Aorta (tissue), 5 donors: ENCODE measurements at regions of chr18 and their contacts with region 1.

Region 1: DNA sequence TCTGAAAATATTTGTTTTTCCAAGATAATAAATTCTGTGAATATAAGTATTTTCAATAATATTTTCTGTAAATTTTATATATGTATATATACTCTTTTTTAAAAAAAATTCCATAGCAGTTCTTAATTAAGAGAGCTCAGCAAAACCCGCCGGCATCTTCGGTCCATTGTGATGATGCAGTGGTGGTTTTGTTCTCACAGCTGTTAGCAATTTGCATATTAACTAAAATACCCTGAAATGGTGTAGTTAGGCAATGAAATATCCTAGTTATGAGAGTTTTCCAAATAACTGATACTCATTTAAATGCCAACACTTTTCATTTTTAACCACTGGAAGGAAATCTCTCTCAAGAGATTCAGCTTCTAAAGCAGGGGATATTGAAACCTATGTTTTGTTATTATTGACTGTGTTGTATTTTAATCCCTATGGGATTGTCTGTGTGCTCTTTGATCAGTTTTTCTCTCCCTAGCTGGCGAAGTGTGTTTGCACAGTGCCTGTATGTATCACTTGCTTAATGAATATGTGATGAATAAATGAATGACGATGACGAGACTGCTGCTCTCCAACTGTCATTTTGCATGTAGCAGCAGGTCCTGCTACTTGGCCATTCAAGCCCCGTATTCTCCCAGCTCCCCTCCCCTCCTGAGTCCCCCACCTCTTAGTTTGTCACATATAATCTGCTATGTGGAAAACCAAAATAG is 42.4 kb downstream of the PSMG2 start:
- DNase-seq: no peak
- ATAC-seq: no peak
- H3K4me3 ChIP-seq: no peak overlapping the region
- H3K27ac ChIP-seq: no peak overlapping the region
- H3K4me1 ChIP-seq: no peaks in the 10 kb centered on the region
- H3K27me3 ChIP-seq: no peaks in the 10 kb centered on the region

Region 2: DNA sequence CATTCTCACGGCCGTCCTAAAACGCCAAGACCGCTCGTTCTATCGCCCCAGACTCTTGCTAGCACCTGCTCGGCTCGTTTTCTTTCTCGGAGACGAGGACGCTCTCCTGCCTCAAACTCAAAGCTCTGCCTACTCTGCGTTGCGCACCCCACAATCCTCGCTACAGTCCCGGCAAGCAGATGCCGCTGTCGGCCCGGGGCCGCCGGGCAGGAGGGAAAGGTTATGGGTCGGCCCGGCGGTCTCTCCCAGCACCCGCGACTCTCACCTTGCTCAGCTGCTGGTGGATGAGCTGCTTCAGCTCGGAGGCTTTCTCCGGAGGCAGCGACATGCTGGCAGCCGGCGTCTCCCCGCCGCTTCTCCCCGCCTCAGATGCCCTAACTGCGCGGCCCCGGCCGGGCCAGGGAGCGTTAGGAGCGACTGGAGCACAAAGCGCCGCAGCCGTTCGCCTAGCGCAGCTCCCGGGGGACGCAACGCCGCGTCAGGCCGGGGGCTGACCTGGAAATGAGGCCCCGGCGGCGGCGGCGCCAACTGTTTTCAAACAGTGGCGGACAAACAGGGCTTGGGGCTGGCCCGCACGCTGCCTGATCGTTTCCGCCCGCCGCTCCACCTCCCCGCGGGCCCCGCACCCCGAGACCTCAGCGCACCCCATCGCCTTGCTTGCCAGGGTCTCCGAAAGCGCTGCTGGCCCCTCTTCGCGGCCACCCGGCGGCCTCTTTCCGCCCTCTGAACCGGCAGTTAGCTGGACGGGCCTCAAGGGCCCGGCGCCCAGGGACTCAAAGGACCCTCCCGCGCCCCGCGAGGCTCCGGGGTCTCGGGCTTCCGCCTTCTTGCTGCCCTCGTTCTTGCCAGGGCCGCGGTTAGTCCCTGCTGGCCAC is 42.8 kb before region 1 on chr18 and contains the starts of genes CEP76 and PSMG2:
- intact Hi-C with region 1: no loop called
- DNase-seq: peak; percentile 94 to 97
- ATAC-seq: peak; percentile 98
- H3K4me3 ChIP-seq: peak within 1 kb of the TSS; percentile 90 to 97
- H3K27ac ChIP-seq: peak within 1 kb of the TSS; percentile 91 to 98
- H3K4me1 ChIP-seq: peaks cover 0 to 3% of the 10 kb centered on the region in 2 donors
- H3K27me3 ChIP-seq: no peaks in the 10 kb centered on the region
- total RNA-seq, gene CEP76: 3.9 to 7.3 TPM
- total RNA-seq, gene PSMG2: 53.9 to 62.0 TPM

Region 3: GRCh38 chr18:12890506-12890905 is 145.3 kb after region 1 on chr18:
- intact Hi-C with region 1: loop called in 1 of 2 experiments (anchors 5 kb)
- DNase-seq: no peak
- ATAC-seq: no peak
- H3K4me3 ChIP-seq: no peak overlapping the region
- H3K27ac ChIP-seq: no peak overlapping the region
- H3K4me1 ChIP-seq: no peaks in the 10 kb centered on the region
- H3K27me3 ChIP-seq: no peaks in the 10 kb centered on the region